PC-3 (cell line): ENCODE measurements at regions of chr11 and their contacts with region 1.

Region 1: GRCh38 chr11:27362749-27363575 is at the start of gene CCDC34:
- DNase-seq: peak; percentile 93
- ATAC-seq: peak; percentile 92
- H3K4me3 ChIP-seq: peak within 1 kb of the TSS; percentile 97
- H3K27ac ChIP-seq: peak within 1 kb of the TSS; percentile 40
- H3K4me1 ChIP-seq: peaks cover 23% of the 10 kb centered on the region
- H3K27me3 ChIP-seq: no peaks in the 10 kb centered on the region
- CTCF ChIP-seq: no peak
- total RNA-seq, gene CCDC34: 9.0 and 11.0 TPM in 2 replicates

Region 2: DNA sequence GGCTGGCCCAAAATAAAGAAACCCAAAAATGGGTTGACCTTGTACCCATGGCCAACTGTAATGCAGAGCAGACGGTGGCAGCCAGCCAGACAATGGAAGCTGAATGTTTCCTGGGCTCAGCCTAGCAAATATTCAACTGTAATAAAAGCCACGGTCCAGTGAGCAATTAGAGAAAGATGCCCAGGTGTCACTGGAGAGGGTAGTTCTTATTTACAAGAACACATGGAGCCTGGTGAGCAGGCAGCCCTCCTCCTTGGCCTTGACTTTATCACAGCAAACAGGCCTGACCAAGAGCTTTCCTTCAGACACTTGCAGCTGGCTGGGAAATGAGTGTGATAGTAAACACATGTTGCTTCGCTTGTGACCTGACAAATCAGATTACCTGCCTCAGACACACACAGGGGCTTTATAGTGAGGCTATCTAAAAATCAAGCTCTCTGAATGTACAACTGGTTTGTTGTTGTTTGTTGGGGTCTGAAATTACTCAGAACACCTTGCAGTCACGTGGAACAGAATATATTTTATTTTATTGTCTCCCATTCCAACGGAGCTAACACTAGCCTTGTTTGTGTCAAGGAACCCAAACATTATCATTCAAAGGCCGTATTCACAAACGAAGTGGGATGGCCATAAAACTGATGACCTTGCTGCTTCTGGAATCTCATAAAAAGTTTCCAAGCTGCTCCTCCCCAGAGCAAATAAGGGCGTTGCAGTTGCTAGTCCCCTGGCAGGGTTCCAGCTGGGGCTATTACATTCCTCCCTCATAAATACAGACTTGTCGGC is 161.3 kb before region 1 on chr11:
- CTCF ChIA-PET with region 1: no interaction called
- POLR2A ChIA-PET with region 1: no interaction called
- intact Hi-C with region 1: loop called (anchors 5 kb)
- DNase-seq: peak; percentile 96
- ATAC-seq: peak; percentile 80
- H3K4me3 ChIP-seq: peak overlapping the region; percentile 22; the same call in 1 of the 2 replicates
- H3K27ac ChIP-seq: peak overlapping the region; percentile 91
- H3K4me1 ChIP-seq: peaks cover 36% of the 10 kb centered on the region
- H3K27me3 ChIP-seq: no peaks in the 10 kb centered on the region
- CTCF ChIP-seq: no peak

Region 3: GRCh38 chr11:27319072-27319471 is 43.9 kb before region 1 on chr11:
- CTCF ChIA-PET with region 1: no interaction called
- POLR2A ChIA-PET with region 1: no interaction called
- intact Hi-C with region 1: no loop called
- DNase-seq: peak; percentile 50
- ATAC-seq: peak; percentile 49
- H3K4me3 ChIP-seq: no peak overlapping the region
- H3K27ac ChIP-seq: peak overlapping the region; percentile 14; the same call in 1 of the 2 replicates
- H3K4me1 ChIP-seq: peaks cover 13% of the 10 kb centered on the region; the same call in 1 of the 2 replicates
- H3K27me3 ChIP-seq: no peaks in the 10 kb centered on the region
- CTCF ChIP-seq: no peak

Region 4: GRCh38 chr11:27392278-27393114 is 29.5 kb after region 1 on chr11:
- CTCF ChIA-PET with region 1: no interaction called
- POLR2A ChIA-PET with region 1: no interaction called
- intact Hi-C with region 1: loop called (anchors 2 kb)
- DNase-seq: peak; percentile 74
- ATAC-seq: peak; percentile 60
- H3K4me3 ChIP-seq: no peak overlapping the region
- H3K27ac ChIP-seq: peak overlapping the region; percentile 71
- H3K4me1 ChIP-seq: peaks cover 55% of the 10 kb centered on the region
- H3K27me3 ChIP-seq: no peaks in the 10 kb centered on the region
- CTCF ChIP-seq: no peak

Region 5: DNA sequence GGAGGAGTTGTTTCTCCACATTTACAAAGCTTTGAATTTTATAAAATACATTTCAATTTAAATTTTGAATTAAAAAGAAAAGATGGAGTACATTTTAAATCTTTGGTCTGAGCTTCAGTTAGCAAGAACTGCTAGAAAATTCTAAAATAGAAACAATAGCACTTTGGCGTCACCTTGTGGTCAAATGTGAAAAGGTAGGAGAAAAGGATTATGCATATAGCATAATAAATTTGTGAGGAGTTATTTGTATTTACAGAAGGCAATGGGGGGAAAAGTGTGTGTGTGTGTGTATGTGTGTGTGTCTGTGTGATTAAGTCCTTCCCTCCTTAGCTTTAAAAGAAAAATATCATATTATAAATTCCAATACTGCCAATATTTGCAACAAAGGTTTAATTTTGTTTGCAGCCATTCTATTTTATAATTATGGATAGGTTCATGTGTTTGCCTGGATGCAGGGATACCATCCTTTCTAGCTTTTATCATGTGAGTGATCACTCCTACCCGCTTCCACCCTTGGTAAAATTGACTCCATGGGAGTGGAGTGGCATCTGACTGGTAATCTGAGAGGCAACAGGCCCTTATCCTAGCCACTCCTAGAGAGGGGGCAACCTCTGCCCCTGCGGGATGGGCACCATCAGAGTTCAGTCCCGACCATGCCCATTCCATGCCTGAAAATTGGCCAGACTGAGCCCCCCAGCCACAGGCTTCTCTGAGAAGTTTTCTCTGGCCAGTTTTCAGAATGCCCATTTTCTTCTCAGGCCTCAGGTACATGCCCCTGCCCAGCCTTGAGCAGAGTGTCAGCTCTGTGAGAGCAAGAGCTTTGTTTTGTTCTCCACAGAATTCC is 123.2 kb after region 1 on chr11:
- CTCF ChIA-PET with region 1: no interaction called
- POLR2A ChIA-PET with region 1: no interaction called
- intact Hi-C with region 1: no loop called
- DNase-seq: peak; percentile 85
- ATAC-seq: peak; percentile 76
- H3K4me3 ChIP-seq: no peak overlapping the region
- H3K27ac ChIP-seq: no peak overlapping the region
- H3K4me1 ChIP-seq: no peaks in the 10 kb centered on the region
- H3K27me3 ChIP-seq: no peaks in the 10 kb centered on the region
- CTCF ChIP-seq: peak; percentile 88

Region 6: DNA sequence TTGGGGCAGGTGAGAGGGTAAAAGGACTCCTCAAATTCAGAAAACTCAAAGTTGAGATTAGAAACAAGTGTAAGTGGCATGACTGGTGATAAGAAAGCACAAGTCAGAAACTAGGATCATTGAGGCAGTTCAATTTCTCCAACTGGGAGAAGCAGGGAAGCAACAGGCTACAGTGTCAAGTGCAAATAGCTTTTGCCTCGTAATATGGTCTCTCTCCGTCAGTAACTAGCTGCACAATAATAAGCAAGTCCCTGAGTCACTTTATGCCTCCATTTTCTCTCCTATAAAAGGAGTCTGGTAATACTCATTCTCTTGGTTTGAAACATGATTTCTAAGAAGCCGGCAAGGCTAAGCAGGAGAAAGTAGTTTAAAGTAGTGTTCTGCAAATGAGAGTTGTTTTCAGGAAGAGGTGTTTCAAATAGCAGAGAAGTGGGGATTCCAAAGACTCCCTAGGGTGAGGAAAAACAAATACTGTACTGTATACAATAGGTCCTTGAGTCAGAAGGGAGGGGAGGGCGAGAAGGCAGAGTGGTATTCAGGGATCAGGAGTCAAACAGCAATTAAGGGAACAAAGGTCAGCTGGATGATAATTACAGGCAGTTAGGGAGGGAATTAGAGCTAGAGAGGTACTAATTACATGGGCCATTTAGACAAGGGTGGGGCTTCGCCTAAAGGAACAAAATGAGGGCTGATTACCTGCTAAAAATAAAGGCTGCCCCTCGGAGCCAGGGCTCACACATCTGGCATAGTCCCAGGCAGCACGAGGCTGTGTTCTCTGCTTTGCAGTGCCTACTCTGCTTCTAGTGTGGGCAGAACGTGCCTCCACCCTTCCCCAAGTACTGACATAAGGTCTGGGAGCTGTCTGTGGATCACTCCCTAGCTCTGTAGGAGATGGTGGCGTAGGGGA is 433.2 kb after region 1 on chr11:
- CTCF ChIA-PET with region 1: no interaction called
- POLR2A ChIA-PET with region 1: no interaction called
- intact Hi-C with region 1: no loop called
- DNase-seq: no peak
- ATAC-seq: peak; percentile 67
- H3K4me3 ChIP-seq: no peak overlapping the region
- H3K27ac ChIP-seq: no peak overlapping the region
- H3K4me1 ChIP-seq: no peaks in the 10 kb centered on the region
- H3K27me3 ChIP-seq: no peaks in the 10 kb centered on the region
- CTCF ChIP-seq: no peak